Colonic mucosa (tissue), 4 donors: ENCODE measurements at regions of chrX and their contacts with region 1.

Region 1: GRCh38 chrX:110450050-110450449 is 91.4 kb downstream of the RTL9 start:
- DNase-seq: peak; percentile 78
- H3K4me3 ChIP-seq: no peak overlapping the region
- H3K27ac ChIP-seq: no peak overlapping the region
- H3K4me1 ChIP-seq: no peaks in the 10 kb centered on the region
- H3K27me3 ChIP-seq: no peaks in the 10 kb centered on the region
- CTCF ChIP-seq: peak; percentile 71

Region 2: DNA sequence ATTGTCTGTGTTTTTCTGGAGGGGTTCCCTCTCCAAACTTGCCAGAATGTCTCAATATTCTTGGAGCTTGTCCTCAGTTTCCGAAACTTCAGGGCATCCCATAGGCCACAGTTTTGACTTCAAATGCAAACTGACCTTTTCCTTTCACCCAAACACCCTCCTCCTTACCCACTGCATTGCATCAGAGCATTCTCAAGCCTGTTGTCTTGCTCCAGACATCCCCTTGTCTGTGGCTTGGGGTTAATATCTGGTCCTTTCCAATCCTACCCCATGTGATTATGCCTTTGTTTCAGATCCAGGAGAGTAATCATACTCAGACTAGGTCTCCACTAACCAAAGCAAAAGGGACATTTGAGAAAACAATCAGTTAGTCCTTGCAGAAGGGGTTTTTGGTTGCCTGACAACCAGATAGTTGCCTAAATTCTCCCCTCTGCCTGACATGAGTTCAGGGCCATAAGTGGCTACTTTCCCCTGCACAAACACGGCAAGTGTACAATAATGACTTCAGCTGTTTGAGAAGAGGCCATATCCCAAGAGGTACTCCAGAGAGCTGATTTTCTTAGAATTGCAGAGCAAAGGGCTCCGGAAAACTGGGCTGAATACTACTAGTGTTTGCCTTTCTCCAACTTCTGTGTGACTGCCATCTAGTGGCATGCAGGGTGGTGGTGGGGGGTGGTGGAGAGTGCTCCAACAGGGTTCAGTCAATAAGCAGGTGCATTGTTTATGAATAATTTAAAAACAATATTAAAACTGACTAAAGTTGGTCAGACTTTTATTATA is 215.4 kb after region 1 on chrX:
- intact Hi-C with region 1: loop called (anchors 10 kb)
- DNase-seq: peak; percentile 36
- H3K4me3 ChIP-seq: no peak overlapping the region
- H3K27ac ChIP-seq: no peak overlapping the region
- H3K4me1 ChIP-seq: no peaks in the 10 kb centered on the region
- H3K27me3 ChIP-seq: no peaks in the 10 kb centered on the region
- CTCF ChIP-seq: peak; percentile 24

Region 3: GRCh38 chrX:110847334-110847733 is 397.3 kb after region 1 on chrX:
- intact Hi-C with region 1: loop called (anchors 5 kb)
- DNase-seq: peak; percentile 24
- H3K4me3 ChIP-seq: no peak overlapping the region
- H3K27ac ChIP-seq: no peak overlapping the region
- H3K4me1 ChIP-seq: no peaks in the 10 kb centered on the region
- H3K27me3 ChIP-seq: peaks cover 6% of the 10 kb centered on the region
- CTCF ChIP-seq: peak; percentile 59